ENCODE measurements at regions of chr3 and their contacts with region 1.

Region 1: DNA sequence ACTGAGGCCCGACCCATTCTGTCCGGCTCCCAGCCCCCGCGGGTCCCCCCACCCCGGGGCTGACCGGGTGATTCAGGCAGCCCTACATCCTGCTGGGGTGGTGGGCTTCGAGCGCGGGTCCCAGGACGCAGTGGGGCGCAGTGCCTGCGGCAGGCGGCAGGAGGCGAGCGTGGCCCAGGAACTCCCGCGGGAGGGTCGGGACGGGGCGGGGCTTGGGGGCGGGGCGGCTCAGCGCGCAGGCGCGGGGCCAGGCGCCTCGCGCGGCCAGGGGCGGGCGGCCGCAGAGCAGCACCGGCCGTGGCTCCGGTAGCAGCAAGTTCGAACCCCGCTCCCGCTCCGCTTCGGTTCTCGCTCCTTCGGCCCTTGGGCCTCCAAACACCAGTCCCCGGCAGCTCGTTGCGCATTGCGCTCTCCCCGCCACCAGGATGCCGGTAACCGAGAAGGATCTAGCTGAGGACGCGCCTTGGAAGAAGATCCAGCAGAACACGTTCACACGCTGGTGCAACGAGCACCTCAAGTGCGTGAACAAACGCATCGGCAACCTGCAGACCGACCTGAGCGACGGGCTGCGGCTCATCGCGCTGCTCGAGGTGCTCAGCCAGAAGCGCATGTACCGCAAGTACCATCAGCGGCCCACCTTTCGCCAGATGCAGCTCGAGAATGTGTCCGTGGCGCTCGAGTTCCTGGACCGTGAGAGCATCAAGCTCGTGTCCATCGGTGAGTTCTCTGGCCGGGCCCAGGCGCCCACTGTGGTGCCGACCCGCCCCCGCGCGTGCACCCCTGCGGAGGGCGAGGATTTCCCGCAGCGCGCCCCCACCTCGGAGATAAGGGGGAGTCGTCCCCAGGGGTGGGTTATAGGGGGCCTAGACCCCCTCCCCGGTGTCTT is at the start of gene FLNB:
- DNase-seq: peak; percentile 91
- ATAC-seq: peak; percentile 80
- H3K4me3 Mint-ChIP-seq: peak within 1 kb of the TSS; percentile 88
- H3K27ac Mint-ChIP-seq: peak within 1 kb of the TSS; percentile 89
- H3K4me1 Mint-ChIP-seq: peaks cover 38% of the 10 kb centered on the region
- H3K27me3 Mint-ChIP-seq: no peaks in the 10 kb centered on the region
- total RNA-seq, gene FLNB: 25.4 to 29.1 TPM

Region 2: GRCh38 chr3:57961828-57962447 is 46.4 kb before region 1 on chr3:
- CTCF ChIA-PET with region 1: interaction called, 3 read pairs
- POLR2A ChIA-PET with region 1: no interaction called
- intact Hi-C with region 1: loop called in 1 of 2 experiments (anchors 2 kb)
- DNase-seq: peak; percentile 12
- ATAC-seq: peak; percentile 71
- H3K4me3 Mint-ChIP-seq: no peak overlapping the region
- H3K27ac Mint-ChIP-seq: no peak overlapping the region
- H3K4me1 Mint-ChIP-seq: peaks cover 2% of the 10 kb centered on the region
- H3K27me3 Mint-ChIP-seq: no peaks in the 10 kb centered on the region

Region 3: GRCh38 chr3:58034738-58035523 is 26.5 kb after region 1 on chr3:
- CTCF ChIA-PET with region 1: interaction called, 6 read pairs
- POLR2A ChIA-PET with region 1: no interaction called
- intact Hi-C with region 1: loop called in 1 of 2 experiments (anchors 2 kb)
- DNase-seq: peak; percentile 66
- ATAC-seq: peak; percentile 98
- H3K4me3 Mint-ChIP-seq: peak overlapping the region; percentile 19
- H3K27ac Mint-ChIP-seq: peak overlapping the region; percentile 86
- H3K4me1 Mint-ChIP-seq: peaks cover 53% of the 10 kb centered on the region
- H3K27me3 Mint-ChIP-seq: no peaks in the 10 kb centered on the region

Region 4: DNA sequence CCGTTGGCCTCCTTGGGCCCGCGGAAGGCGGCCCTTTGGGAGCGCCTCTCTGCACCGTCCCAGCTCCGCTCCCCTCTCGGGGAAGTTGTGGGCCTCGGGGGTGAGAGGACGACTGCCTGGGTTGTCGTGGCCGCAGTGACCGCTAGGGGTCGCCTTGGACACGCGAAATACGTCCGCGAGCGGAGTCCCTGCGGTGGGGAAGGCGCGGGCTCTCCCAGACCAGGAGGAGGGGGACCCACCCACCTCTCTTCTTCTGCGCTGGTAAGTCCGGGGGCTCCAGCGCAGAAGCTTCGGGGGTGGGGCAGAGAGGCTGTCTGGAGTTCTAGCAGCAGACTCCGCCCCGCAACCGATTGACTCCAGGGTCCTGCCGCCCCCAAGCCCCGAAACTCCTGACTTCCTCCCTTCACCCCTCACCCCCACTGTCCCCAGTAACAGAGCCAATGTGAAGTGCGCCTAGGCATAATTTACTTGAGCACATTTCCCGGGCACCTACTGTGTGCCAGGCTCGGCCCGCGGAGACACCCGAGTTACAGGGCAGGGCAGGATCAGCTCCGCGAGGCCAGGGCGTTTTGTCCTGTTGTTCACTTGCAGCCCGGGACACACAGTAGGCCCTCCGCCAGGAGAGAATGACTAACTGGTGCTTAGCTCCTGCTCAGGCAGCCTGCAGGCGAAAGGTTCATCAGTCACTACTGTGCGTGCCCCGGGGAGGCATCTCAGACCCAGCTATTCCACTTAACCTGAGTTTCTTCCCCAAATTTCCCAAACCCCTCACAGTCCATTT is 169.6 kb after region 1 on chr3:
- CTCF ChIA-PET with region 1: interaction called, 5 read pairs
- POLR2A ChIA-PET with region 1: no interaction called
- intact Hi-C with region 1: loop called (anchors 1 to 2 kb)
- DNase-seq: peak; percentile 95
- ATAC-seq: peak; percentile 86
- H3K4me3 Mint-ChIP-seq: peak overlapping the region; percentile 61
- H3K27ac Mint-ChIP-seq: peak overlapping the region; percentile 31
- H3K4me1 Mint-ChIP-seq: peaks cover 13% of the 10 kb centered on the region
- H3K27me3 Mint-ChIP-seq: peaks cover 4% of the 10 kb centered on the region

Region 5: GRCh38 chr3:58491506-58492402 is 483.4 kb after region 1 on chr3 and contains the start of gene KCTD6:
- CTCF ChIA-PET with region 1: no interaction called
- POLR2A ChIA-PET with region 1: no interaction called
- intact Hi-C with region 1: loop called in 1 of 2 experiments (anchors 5 kb)
- DNase-seq: peak; percentile 91
- ATAC-seq: peak; percentile 90
- H3K4me3 Mint-ChIP-seq: peak within 1 kb of the TSS; percentile 84
- H3K27ac Mint-ChIP-seq: peak within 1 kb of the TSS; percentile 90
- H3K4me1 Mint-ChIP-seq: peaks cover 45% of the 10 kb centered on the region
- H3K27me3 Mint-ChIP-seq: peaks cover 6% of the 10 kb centered on the region
- total RNA-seq, gene KCTD6: 7.1 to 7.9 TPM

Region 6: DNA sequence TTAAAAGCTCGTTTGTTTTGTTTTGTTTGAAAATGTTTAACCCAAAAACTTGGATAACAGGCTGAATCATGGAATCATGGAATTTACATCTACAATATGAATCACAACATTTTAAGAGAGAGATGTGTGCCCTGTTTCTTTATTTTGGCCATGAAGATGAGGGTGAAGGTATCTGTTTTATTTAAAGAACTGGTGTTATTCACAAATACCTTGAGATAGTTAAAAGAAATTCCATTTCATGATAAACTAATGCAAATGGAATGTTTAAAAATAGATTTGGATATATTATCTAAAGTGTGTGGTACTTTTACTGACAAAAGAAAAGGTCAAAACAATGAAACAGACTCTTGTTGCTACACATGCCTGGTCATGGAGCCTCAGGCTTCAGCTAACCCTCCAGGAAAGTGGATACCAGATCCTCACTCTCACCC is 1527.4 kb after region 1 on chr3:
- CTCF ChIA-PET with region 1: no interaction called
- POLR2A ChIA-PET with region 1: no interaction called
- intact Hi-C with region 1: no loop called
- DNase-seq: no peak
- ATAC-seq: no peak
- H3K4me3 Mint-ChIP-seq: no peak overlapping the region
- H3K27ac Mint-ChIP-seq: no peak overlapping the region
- H3K4me1 Mint-ChIP-seq: peaks cover 13% of the 10 kb centered on the region
- H3K27me3 Mint-ChIP-seq: no peaks in the 10 kb centered on the region

Measured in activated CD4-positive, alpha-beta T cell treated with anti-CD3 and anti-CD28 coated beads for 36 hours (primary cell).